ENCODE measurements at regions of chr16 and their contacts with region 1.

Region 1: GRCh38 chr16:20383106-20384029 is 21.2 kb downstream of the PDILT start:
- DNase-seq: peak; percentile 47 to 71 (median 58)
- H3K4me3 ChIP-seq: no peak overlapping the region
- H3K27ac ChIP-seq: no peak overlapping the region
- H3K4me1 ChIP-seq: peaks cover 0 to 4% (median 0%) of the 10 kb centered on the region in 4 experiments
- H3K27me3 ChIP-seq: peaks cover 0 to 15% (median 8%) of the 10 kb centered on the region in 5 experiments

Region 2: DNA sequence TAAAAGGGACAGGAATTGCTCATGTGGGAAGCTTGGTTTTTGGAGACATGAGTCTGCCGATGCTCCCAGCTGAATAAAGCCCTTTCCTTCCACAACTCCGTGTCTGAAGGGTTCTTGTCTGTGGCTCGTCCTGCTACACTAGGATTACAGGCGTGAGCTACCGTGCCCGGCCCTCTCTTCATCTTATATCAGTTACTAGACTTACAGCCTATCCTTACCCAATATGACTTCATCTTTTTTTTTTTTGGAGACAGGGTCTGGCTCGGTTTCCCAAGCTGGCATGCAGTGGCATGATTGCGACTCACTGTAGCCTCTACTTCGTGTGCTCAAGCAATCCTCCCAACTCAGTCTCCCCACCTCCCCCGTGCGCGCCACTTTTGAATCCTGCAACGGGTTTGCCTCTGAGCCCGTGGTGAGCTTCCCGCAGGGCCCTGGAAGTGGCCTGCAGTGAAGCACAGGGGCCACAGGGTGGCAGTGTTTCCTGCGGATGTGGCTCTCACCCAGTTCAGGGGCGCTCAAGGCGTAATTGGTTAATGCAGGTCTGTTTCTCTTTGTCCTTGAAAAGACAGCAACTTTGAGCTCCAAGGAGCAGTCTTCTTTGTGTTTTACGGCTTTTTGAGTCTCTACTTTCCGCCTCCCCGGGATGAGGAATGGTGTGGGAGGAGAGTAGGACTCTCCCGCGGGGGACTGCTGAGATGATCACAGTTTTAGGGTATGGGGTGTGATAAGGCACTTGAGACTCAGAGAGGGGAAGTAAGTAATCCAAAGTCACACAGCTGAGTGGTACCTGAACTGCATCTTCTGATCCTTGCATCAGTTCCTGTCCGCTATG is 476.0 kb before region 1 on chr16:
- CTCF ChIA-PET with region 1: interaction called, 51 read pairs
- POLR2A ChIA-PET with region 1: no interaction called
- DNase-seq: peak; percentile 66 to 86 (median 82)
- H3K4me3 ChIP-seq: no peak overlapping the region
- H3K27ac ChIP-seq: no peak overlapping the region
- H3K4me1 ChIP-seq: peaks cover 0 to 3% (median 0%) of the 10 kb centered on the region in 4 experiments
- H3K27me3 ChIP-seq: peaks cover 0 to 3% (median 0%) of the 10 kb centered on the region in 5 experiments

Region 3: DNA sequence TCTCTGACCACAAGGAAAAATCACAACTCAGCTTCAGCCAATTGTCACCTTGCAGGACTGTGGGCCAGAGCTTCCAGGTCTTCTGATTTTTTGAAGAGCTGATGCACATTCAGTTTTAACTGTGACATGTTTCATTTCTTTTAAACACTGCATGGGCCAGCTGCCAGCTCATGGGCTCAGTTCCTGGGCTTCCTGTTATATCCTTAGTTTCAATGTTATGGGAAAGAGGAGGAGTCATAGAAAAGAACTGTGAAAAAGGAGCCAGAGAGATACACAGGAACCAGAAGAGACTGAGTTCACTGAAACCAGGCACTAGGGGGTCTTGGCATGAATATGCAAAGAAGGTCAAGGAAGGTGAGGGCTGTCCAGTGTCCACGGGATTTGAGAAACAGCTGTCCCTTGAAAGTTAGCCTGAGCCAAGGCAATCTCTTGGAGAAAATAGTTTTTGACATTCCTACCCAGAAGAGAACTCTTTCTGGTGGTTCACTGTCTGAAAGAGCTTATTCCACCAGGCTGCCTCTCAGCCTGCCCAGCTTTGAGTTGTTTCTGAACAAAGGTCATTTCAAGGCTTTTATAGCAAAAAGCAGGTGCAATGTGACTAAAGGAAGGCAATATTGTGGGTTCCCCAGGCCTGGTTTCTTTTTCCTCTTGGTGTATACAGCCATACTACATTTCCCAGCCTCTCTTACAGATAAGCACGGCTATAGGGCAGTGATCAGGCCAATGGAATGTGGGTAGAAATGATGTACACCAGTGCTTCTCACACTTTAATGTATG is 10.6 kb after region 1 on chr16:
- CTCF ChIA-PET with region 1: interaction called, 14 read pairs
- POLR2A ChIA-PET with region 1: no interaction called
- DNase-seq: no peak
- H3K4me3 ChIP-seq: no peak overlapping the region
- H3K27ac ChIP-seq: no peak overlapping the region
- H3K4me1 ChIP-seq: no peaks in the 10 kb centered on the region
- H3K27me3 ChIP-seq: no peaks in the 10 kb centered on the region

Measured in common myeloid progenitor, CD34-positive (primary cell).